ENCODE measurements at regions of chr3 and their contacts with region 1.

Region 1: GRCh38 chr3:51670823-51671733 is at the start of gene TEX264:
- DNase-seq: peak; percentile 86 to 93 (median 90)
- H3K4me3 ChIP-seq: peak within 1 kb of the TSS; percentile 99
- H3K27ac ChIP-seq: peak within 1 kb of the TSS; percentile 34 to 89
- H3K4me1 ChIP-seq: peaks cover 3% of the 10 kb centered on the region
- H3K27me3 ChIP-seq: no peaks in the 10 kb centered on the region
- CTCF ChIP-seq: no peak
- EP300 ChIP-seq: no peak
- POLR2A ChIP-seq: peak; percentile 73
- total RNA-seq, gene TEX264: 27.1 to 88.8 (median 38.7) TPM

Region 2: GRCh38 chr3:50184242-50184978 is 1486.7 kb before region 1 on chr3:
- intact Hi-C with region 1: loop called in 1 of 4 experiments (anchors 5 kb)
- DNase-seq: no peak
- H3K4me3 ChIP-seq: no peak overlapping the region
- H3K27ac ChIP-seq: no peak overlapping the region
- H3K4me1 ChIP-seq: no peaks in the 10 kb centered on the region
- H3K27me3 ChIP-seq: no peaks in the 10 kb centered on the region
- CTCF ChIP-seq: no peak
- EP300 ChIP-seq: no peak
- POLR2A ChIP-seq: no peak

Region 3: GRCh38 chr3:51384726-51385473 is 286.2 kb before region 1 on chr3 and contains the start of gene MANF:
- intact Hi-C with region 1: loop called in 2 of 4 experiments (anchors 5 to 10 kb)
- DNase-seq: peak; percentile 95 to 97 (median 96)
- H3K4me3 ChIP-seq: peak within 1 kb of the TSS; percentile 83
- H3K27ac ChIP-seq: peak within 1 kb of the TSS; percentile 81 to 90
- H3K4me1 ChIP-seq: peaks cover 1% of the 10 kb centered on the region
- H3K27me3 ChIP-seq: no peaks in the 10 kb centered on the region
- CTCF ChIP-seq: peak in 2 of 3 donors; percentile 18 to 30
- EP300 ChIP-seq: no peak
- POLR2A ChIP-seq: peak; percentile 73
- total RNA-seq, gene MANF: 18.4 to 75.5 (median 43.4) TPM

Region 4: DNA sequence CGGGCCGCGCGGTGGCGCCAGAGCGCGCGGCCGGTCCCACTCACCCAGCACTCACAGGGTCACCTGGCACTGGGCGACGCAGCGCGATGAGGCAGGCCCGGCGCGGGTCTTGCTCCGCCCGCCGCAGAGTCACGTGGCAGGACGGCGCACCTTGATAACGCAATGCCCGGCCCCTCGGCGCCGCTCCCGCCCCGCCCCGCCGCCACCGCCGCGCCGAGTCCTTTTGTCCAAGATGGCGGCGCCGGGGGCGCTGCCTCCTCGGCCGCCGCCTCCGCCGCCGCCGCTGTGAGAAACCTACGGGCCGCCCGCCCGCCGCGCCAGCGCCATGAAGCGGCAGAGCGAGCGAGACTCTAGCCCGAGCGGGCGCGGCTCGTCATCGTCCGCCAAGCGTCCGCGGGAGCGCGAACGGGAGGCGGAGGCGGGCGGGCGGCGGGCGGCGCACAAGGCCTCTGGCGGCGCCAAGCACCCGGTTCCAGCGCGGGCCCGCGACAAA is 280.0 kb before region 1 on chr3 and contains the start of gene RBM15B:
- intact Hi-C with region 1: loop called in 2 of 4 experiments (anchors 5 to 10 kb)
- DNase-seq: peak; percentile 97 to 98 (median 98)
- H3K4me3 ChIP-seq: peak within 1 kb of the TSS; percentile 77
- H3K27ac ChIP-seq: peak within 1 kb of the TSS; percentile 81 to 88
- H3K4me1 ChIP-seq: peaks cover 15% of the 10 kb centered on the region
- H3K27me3 ChIP-seq: no peaks in the 10 kb centered on the region
- CTCF ChIP-seq: peak in 2 of 3 donors; percentile 87 to 93
- EP300 ChIP-seq: no peak
- POLR2A ChIP-seq: peak; percentile 50
- total RNA-seq, gene RBM15B: 21.3 to 40.2 (median 30.0) TPM

Region 5: DNA sequence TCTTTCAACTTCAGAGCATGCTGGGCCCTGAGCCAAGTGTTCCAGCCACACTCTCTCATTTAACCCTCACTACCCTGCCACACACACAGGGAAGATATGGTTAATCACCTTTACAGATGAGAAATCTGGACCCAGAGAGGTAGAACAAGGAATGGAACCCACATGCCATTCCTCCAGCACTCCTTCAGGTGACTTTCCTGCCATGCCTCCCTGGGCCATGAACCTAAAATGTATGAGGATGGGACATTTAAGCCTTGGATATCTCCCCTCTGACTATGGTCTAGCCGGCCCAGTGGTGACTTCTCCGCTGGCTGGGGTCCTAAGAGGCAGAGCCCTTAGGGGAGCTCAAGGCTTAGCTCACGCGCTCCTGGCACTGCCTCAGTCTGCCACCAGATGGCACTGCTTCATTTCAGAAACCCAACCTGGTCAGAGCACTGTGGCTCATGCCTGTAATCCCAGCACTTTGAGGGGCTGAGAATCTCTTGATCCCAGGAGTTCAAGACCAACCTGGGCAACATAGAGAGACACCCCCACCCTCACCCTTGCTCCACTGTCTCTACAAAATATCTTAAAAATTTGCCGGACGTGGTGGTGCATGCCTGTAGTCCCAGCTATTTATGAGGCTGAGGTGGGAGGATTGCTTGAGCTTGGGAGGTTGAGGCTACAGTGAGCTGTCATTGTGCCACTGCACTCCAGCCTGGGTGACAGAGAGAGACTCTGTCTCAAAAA is 169.1 kb before region 1 on chr3:
- intact Hi-C with region 1: loop called (anchors 1 to 5 kb)
- DNase-seq: peak; percentile 69 to 89 (median 85)
- H3K4me3 ChIP-seq: no peak overlapping the region
- H3K27ac ChIP-seq: no peak overlapping the region
- H3K4me1 ChIP-seq: no peaks in the 10 kb centered on the region
- H3K27me3 ChIP-seq: no peaks in the 10 kb centered on the region
- CTCF ChIP-seq: peak; percentile 89 to 92 (median 90)
- EP300 ChIP-seq: no peak
- POLR2A ChIP-seq: no peak

Region 6: GRCh38 chr3:51710641-51711351 is 39.7 kb after region 1 on chr3:
- intact Hi-C with region 1: no loop called
- DNase-seq: peak in 3 of 5 donors; percentile 4 to 18 (median 7)
- H3K4me3 ChIP-seq: no peak overlapping the region
- H3K27ac ChIP-seq: no peak overlapping the region
- H3K4me1 ChIP-seq: no peaks in the 10 kb centered on the region
- H3K27me3 ChIP-seq: no peaks in the 10 kb centered on the region
- CTCF ChIP-seq: no peak
- EP300 ChIP-seq: no peak
- POLR2A ChIP-seq: no peak

Region 7: DNA sequence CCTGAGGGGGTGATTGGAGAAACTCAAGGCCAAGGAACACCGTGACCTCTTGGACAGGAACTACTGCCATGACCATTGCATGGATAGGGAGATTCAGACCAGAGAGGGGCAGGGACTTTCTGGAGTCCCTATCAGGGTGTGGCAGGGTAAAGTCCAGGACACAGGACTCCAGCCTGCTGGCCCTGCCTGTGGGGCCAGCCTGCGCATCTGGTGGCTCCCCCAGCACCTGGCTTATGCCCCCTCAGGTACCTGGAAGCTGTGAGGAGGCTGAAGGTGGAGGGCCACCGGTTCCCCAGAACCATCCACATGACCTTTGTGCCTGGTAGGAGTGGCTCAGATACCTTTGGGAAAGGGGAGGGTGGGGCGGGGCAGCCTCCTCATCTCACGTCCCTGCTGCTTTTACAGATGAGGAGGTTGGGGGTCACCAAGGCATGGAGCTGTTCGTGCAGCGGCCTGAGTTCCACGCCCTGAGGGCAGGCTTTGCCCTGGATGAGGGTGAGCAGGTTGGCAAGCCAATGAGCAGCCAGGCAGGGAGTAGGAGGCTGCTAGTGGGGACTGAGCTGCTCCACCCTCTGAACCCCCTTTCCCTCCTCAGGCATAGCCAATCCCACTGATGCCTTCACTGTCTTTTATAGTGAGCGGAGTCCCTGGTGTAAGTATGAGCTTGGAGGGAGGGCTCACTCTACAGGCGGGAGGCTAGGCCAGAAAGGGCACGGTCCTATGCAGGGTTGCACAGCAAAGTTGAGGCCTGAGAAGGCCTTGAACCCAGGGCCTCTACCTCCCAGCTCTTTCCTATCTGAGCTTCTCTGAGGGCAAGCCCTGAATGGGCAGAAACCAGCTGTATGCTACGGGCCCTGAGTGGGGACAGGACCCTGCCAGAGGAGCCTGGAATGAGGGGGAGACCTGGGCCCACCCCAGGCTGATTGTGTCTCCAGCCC is 315.2 kb after region 1 on chr3:
- intact Hi-C with region 1: no loop called
- DNase-seq: no peak
- H3K4me3 ChIP-seq: no peak overlapping the region
- H3K27ac ChIP-seq: no peak overlapping the region
- H3K4me1 ChIP-seq: peaks cover 9% of the 10 kb centered on the region
- H3K27me3 ChIP-seq: no peaks in the 10 kb centered on the region
- CTCF ChIP-seq: no peak
- EP300 ChIP-seq: no peak
- POLR2A ChIP-seq: no peak